ENCODE measurements at regions of chr10 and their contacts with region 1.

Region 1: DNA sequence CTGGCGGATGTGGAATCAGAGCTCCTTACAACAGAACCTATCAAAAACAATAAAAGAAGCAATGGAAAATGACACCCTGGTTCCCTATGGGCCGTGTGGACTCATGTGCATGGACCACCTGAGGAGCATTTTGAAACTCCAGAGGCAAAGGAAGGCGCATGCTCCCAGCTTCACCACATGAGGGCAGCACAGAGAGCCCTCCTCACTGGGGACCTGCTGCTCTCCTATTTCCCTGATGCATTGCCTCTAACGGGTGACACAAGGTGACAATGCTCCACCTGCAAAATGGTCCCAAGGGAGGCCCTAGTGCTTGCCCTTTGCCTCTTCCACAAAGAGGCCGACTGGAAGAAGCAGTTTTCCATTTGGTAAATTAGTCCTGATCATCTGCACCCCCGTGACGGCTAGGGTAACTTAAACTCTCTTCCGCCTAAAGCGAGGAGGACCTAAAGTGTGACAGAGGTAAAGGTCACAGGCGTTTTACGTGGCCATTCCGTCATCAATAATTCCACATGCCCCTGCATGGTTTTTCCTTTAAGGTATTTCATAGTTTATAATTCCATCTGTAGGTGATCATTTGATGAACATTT is 67.7 kb downstream of the GPAM start:
- DNase-seq: no peak
- H3K4me3 ChIP-seq: no peak overlapping the region
- H3K27ac ChIP-seq: no peak overlapping the region
- H3K4me1 ChIP-seq: no peaks in the 10 kb centered on the region
- H3K27me3 ChIP-seq: no peaks in the 10 kb centered on the region
- CTCF ChIP-seq: peak in 9 of 11 experiments; percentile 29 to 77 (median 66)
- POLR2A ChIP-seq: no peak

Region 2: GRCh38 chr10:112314822-112315474 is 199.1 kb after region 1 on chr10:
- intact Hi-C with region 1: loop called (anchors 10 kb)
- DNase-seq: peak; percentile 88
- H3K4me3 ChIP-seq: no peak overlapping the region
- H3K27ac ChIP-seq: no peak overlapping the region
- H3K4me1 ChIP-seq: peaks cover 0 to 13% (median 3%) of the 10 kb centered on the region in 6 donors
- H3K27me3 ChIP-seq: peaks cover 0 to 17% (median 0%) of the 10 kb centered on the region in 7 donors
- CTCF ChIP-seq: peak; percentile 39 to 91 (median 84)
- POLR2A ChIP-seq: no peak

Measured in spleen (tissue), 13 donors.